ENCODE measurements at regions of chr20 and their contacts with region 1.

Region 1: GRCh38 chr20:52127309-52127708 is 64.3 kb downstream of the ZFP64 start:
- DNase-seq: no peak
- H3K27ac ChIP-seq: no peak overlapping the region
- CTCF ChIP-seq: no peak

Region 2: GRCh38 chr20:52104546-52105441 is 22.5 kb before region 1 on chr20:
- CTCF ChIA-PET with region 1: interaction called, 10 read pairs
- POLR2A ChIA-PET with region 1: no interaction called
- DNase-seq: peak; percentile 73
- H3K27ac ChIP-seq: peak overlapping the region; percentile 23; the same call in 1 of the 2 replicates
- CTCF ChIP-seq: no peak

Region 3: GRCh38 chr20:52150440-52151258 is 23.3 kb after region 1 on chr20:
- CTCF ChIA-PET with region 1: interaction called, 15 read pairs
- POLR2A ChIA-PET with region 1: no interaction called
- DNase-seq: peak; percentile 70
- H3K27ac ChIP-seq: no peak overlapping the region
- CTCF ChIP-seq: peak; percentile 99

Region 4: GRCh38 chr20:52372169-52372568 is 244.9 kb after region 1 on chr20:
- CTCF ChIA-PET with region 1: no interaction called
- POLR2A ChIA-PET with region 1: no interaction called
- DNase-seq: no peak
- H3K27ac ChIP-seq: no peak overlapping the region
- CTCF ChIP-seq: no peak

Measured in RWPE1 (cell line).